Activated CD4-positive, alpha-beta memory T cell treated with anti-CD3 and anti-CD28 coated beads, Interleukin-2, amount 10 ng/mL, durations not matched to agents 7 days and 5 days (primary cell): ENCODE measurements at regions of chr3 and their contacts with region 1.

Region 1: DNA sequence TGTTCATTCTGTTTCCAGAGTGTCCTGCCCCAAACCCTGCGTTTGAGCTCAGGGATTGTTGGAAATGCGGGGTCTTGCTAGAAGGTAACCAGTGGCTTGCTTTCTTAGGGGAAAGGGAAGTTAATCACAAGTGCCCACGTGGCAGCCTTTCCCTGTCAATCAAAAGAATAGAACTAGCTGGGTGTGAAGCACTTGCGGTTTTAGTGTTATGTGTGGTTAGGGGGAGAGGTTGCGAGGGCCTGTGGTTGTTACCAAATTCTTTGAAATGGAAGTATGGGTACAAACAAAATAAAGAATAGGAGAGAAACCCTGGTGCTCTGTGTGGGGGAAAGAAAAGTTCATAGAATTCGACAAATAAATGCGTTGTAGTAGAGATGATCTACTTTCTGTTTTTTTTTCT is 67.6 kb downstream of the FNDC3B start:
- DNase-seq: peak; percentile 83
- H3K4me3 Mint-ChIP-seq: peak overlapping the region; percentile 67
- H3K27ac Mint-ChIP-seq: peak overlapping the region; percentile 94
- H3K4me1 Mint-ChIP-seq: peaks cover 74% of the 10 kb centered on the region
- H3K27me3 Mint-ChIP-seq: peaks cover 2% of the 10 kb centered on the region

Region 2: GRCh38 chr3:172034786-172035685 is 72.0 kb before region 1 on chr3:
- CTCF ChIA-PET with region 1: interaction called, 18 read pairs
- POLR2A ChIA-PET with region 1: interaction called, 6 read pairs
- DNase-seq: no peak
- H3K4me3 Mint-ChIP-seq: no peak overlapping the region
- H3K27ac Mint-ChIP-seq: no peak overlapping the region
- H3K4me1 Mint-ChIP-seq: peaks cover 31% of the 10 kb centered on the region
- H3K27me3 Mint-ChIP-seq: no peaks in the 10 kb centered on the region

Region 3: DNA sequence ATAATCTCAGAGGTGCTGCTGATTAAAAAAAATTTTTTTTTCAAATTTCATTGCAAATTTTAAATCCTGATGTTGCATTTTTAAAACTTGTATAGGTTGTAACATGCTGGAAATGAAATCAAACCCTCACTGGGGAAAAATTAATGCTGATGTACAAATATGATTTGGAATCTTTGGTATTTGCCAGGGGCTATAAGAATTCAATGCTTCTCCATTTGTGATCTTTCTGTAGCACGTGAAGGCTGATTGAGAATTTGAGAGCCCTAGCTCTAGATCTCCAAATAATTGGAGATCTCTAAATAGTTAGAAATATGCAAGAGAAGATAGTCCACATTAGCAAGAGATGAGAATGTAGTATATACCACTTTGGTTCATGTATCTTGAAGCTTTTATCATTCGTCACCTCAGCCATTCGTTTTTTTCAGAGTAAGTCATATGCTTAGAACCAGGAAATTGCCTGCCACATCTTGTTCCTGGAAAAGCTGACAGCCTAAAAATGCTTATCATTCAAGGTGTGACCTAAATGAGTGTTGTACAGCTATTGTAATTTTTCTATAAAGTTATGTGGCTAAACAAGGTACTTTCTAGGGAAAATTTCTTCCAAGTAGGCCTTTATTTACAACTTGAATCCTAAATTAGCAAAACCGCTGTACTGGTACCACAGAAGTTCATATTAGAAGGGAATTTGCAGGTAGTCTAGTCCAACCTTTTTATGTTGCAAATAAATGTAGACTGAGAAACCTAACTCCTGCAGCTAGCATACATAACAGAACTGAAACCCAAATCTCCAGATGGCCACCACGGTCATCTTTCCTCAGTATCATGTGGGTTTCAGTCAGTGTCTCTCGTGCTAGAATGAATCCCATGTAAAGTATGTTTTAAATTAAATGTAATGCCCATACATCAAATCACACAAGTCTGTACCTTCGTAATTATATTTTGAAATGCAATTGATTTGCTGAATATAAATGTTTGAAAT is 19.1 kb before region 1 on chr3:
- CTCF ChIA-PET with region 1: interaction called, 8 read pairs
- POLR2A ChIA-PET with region 1: interaction called, 57 read pairs
- DNase-seq: peak; percentile 29
- H3K4me3 Mint-ChIP-seq: no peak overlapping the region
- H3K27ac Mint-ChIP-seq: peak overlapping the region; percentile 83
- H3K4me1 Mint-ChIP-seq: peaks cover 50% of the 10 kb centered on the region
- H3K27me3 Mint-ChIP-seq: no peaks in the 10 kb centered on the region

Region 4: GRCh38 chr3:172094621-172095557 is 12.1 kb before region 1 on chr3:
- CTCF ChIA-PET with region 1: interaction called, 6 read pairs
- POLR2A ChIA-PET with region 1: interaction called, 12 read pairs
- DNase-seq: peak; percentile 53
- H3K4me3 Mint-ChIP-seq: no peak overlapping the region
- H3K27ac Mint-ChIP-seq: peak overlapping the region; percentile 53
- H3K4me1 Mint-ChIP-seq: peaks cover 43% of the 10 kb centered on the region
- H3K27me3 Mint-ChIP-seq: no peaks in the 10 kb centered on the region

Region 5: GRCh38 chr3:172129870-172130683 is 23.1 kb after region 1 on chr3:
- CTCF ChIA-PET with region 1: interaction called, 9 read pairs
- POLR2A ChIA-PET with region 1: interaction called, 51 read pairs
- DNase-seq: peak; percentile 74
- H3K4me3 Mint-ChIP-seq: peak overlapping the region; percentile 28
- H3K27ac Mint-ChIP-seq: peak overlapping the region; percentile 81
- H3K4me1 Mint-ChIP-seq: peaks cover 66% of the 10 kb centered on the region
- H3K27me3 Mint-ChIP-seq: no peaks in the 10 kb centered on the region

Region 6: GRCh38 chr3:172138795-172139441 is 31.9 kb after region 1 on chr3:
- CTCF ChIA-PET with region 1: interaction called, 6 read pairs
- POLR2A ChIA-PET with region 1: interaction called, 15 read pairs
- DNase-seq: peak; percentile 51
- H3K4me3 Mint-ChIP-seq: peak overlapping the region; percentile 34
- H3K27ac Mint-ChIP-seq: peak overlapping the region; percentile 76
- H3K4me1 Mint-ChIP-seq: peaks cover 73% of the 10 kb centered on the region
- H3K27me3 Mint-ChIP-seq: no peaks in the 10 kb centered on the region